ENCODE measurements at regions of chr22 and their contacts with region 1.

Region 1: GRCh38 chr22:27780161-27780575 is 21.4 kb downstream of the MN1 start:
- DNase-seq: no peak

Region 2: GRCh38 chr22:26672590-26673468 is 1107.3 kb before region 1 on chr22:
- intact Hi-C with region 1: loop called in 1 of 2 experiments (anchors 10 kb)
- DNase-seq: peak; percentile 97